HCT116 (cell line): ENCODE measurements at regions of chrX and their contacts with region 1.

Region 1: DNA sequence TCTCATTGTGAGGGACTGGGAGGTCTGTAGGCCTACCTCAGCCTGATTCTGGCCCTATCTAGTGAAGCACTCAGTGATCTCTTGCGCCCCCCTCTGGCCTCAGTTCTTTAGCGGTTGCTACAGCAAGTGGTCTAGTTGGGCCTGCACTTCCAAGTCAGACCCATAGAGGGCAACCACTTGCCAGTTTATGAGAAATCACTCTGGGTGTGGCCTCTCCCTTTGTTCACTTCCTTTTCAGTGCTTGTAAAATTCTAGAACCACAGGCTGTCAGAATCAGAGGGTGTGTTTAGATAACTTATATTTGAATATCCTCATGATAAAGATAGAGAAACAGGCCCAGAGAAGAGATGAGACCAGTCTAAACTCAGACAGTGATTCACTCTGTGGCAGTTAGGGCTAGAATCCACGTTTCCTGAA is 60.9 kb upstream of the LAS1L start:
- DNase-seq: peak; percentile 84
- ATAC-seq: peak; percentile 95
- H3K4me3 ChIP-seq: no peak overlapping the region
- H3K27ac ChIP-seq: no peak overlapping the region
- H3K4me1 ChIP-seq: peaks cover 5 to 11% of the 10 kb centered on the region in 2 experiments; a peak in 3 of 4 replicates
- H3K27me3 ChIP-seq: no peaks in the 10 kb centered on the region
- CTCF ChIP-seq: peak; percentile 91 to 98 (median 97)
- POLR2A ChIP-seq: no peak
- RAD21 ChIP-seq: peak; percentile 87

Region 2: DNA sequence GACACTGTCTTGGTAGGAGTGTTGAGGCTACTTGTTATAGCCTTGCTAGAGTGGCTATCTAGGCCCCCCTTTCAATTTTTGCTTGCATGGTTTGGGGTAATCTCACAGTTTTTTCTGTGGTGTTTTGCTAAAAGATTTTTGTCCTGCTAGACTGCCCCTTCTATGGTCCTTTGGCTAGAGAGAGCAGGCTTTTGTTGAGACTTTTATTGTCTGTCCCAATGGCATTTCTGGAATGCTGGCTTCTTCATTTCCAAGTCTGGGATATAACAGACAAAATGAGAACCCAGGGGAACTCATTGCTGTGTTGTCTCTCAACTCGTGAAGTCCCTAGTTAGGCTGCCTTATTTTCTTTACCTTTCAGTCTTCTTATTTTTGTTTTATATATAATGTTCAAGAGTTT is 459.0 kb before region 1 on chrX:
- CTCF ChIA-PET with region 1: no interaction called
- POLR2A ChIA-PET with region 1: no interaction called
- RAD21 ChIA-PET with region 1: no interaction called
- intact Hi-C with region 1: no loop called
- DNase-seq: no peak
- ATAC-seq: no peak
- H3K4me3 ChIP-seq: no peak overlapping the region
- H3K27ac ChIP-seq: no peak overlapping the region
- H3K4me1 ChIP-seq: no peaks in the 10 kb centered on the region
- H3K27me3 ChIP-seq: no peaks in the 10 kb centered on the region
- CTCF ChIP-seq: no peak
- POLR2A ChIP-seq: no peak
- RAD21 ChIP-seq: no peak

Region 3: GRCh38 chrX:65667503-65668376 is 72.3 kb after region 1 on chrX and contains the start of gene MSN:
- CTCF ChIA-PET with region 1: no interaction called
- POLR2A ChIA-PET with region 1: no interaction called
- RAD21 ChIA-PET with region 1: no interaction called
- intact Hi-C with region 1: loop called (anchors 1 kb)
- DNase-seq: no peak
- ATAC-seq: peak; percentile 89
- H3K4me3 ChIP-seq: peak within 1 kb of the TSS; percentile 68 to 78
- H3K27ac ChIP-seq: peak within 1 kb of the TSS; percentile 79
- H3K4me1 ChIP-seq: peaks cover 14 to 25% of the 10 kb centered on the region in 2 experiments
- H3K27me3 ChIP-seq: no peaks in the 10 kb centered on the region
- CTCF ChIP-seq: no peak
- POLR2A ChIP-seq: no peak
- RAD21 ChIP-seq: no peak
- total RNA-seq, gene MSN: 119 TPM

Region 4: GRCh38 chrX:65702956-65703355 is 107.5 kb after region 1 on chrX:
- CTCF ChIA-PET with region 1: no interaction called
- POLR2A ChIA-PET with region 1: no interaction called
- RAD21 ChIA-PET with region 1: interaction called in 1 of 2 experiments, 7 read pairs
- intact Hi-C with region 1: loop called (anchors 5 kb)
- DNase-seq: no peak
- ATAC-seq: no peak
- H3K4me3 ChIP-seq: no peak overlapping the region
- H3K27ac ChIP-seq: no peak overlapping the region
- H3K4me1 ChIP-seq: peaks cover 8 to 20% of the 10 kb centered on the region in 2 experiments
- H3K27me3 ChIP-seq: no peaks in the 10 kb centered on the region
- CTCF ChIP-seq: no peak
- POLR2A ChIP-seq: no peak
- RAD21 ChIP-seq: no peak